Activated T-helper 2 cell treated with anti-CD3 and anti-CD28 coated beads, Interferon-gamma antibody, Interleukin-2, Interleukin-4, amounts not matched to agents 10 μg/mL and 5 μg/mL and 100 μg/mL, durations not matched to agents 14 hours and 24 hours and 36 hours (primary cell): ENCODE measurements at regions of chr3 and their contacts with region 1.

Region 1: DNA sequence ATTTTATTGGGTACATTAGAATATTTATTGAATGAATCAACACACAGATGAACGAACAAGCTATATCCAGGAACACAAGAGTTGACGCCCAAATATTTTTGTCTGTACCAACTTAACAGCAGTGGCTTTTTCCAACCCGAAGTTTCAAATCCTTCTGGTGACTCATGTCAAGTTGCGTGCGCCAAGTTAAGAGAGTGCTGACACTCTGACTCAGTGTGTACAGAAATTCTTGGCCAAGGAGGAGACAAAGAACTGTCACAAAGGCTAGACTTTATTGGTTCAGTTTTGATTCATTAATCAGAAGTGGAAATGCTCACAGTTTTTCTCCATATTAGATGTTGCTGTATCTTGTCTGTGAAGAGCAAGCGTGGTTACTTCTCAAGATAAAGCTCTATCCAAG is 59.6 kb upstream of the TSC22D2 start:
- DNase-seq: no peak
- H3K4me3 Mint-ChIP-seq: no peak overlapping the region
- H3K27ac Mint-ChIP-seq: no peak overlapping the region
- H3K4me1 Mint-ChIP-seq: peaks cover 3% of the 10 kb centered on the region
- H3K27me3 Mint-ChIP-seq: peaks cover 11% of the 10 kb centered on the region

Region 2: DNA sequence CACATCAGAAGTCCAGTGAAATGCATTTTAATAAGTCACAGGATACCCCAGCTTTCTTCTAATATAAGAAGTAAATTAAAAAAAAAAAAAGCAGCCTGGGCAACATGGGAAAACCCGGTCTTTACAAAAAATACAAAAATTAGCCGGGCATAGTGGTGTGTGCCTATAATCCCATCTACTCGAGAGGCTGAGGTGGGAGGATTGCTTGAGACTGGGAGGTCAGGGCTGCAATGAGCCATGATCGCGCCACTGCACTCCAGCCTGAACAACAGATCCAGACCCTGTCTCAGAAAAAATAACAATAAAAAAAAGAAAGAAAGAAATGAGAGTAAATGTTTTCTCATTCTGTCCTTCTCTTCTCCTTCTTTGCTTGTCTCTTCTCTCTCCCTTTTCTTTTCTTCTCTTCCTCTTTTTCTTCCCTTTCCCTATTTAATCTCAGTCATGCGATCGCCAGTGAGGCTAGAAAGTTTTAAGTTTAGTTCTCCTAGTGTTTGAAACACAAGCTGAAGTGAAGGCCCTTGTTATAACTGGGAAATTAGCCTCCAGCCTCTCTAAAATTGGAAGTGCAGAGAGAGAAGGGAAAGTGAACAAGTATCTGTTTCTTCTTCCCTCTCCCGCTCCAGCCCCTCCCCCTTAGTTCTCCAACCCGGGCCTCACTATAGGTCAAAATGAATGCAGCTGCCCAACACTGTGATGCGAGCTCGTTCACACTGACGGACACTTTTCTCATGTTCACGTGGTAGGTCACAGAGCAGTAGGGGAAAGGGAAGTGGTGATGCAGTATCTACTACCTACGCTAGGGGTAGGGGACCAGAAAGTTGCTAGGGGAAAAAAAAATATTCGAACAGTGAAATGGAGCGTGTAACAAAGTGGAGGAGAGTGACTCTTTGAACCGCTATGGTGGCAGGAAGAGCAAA is 36.1 kb after region 1 on chr3:
- intact Hi-C with region 1: loop called (anchors 2 kb)
- DNase-seq: peak; percentile 40
- H3K4me3 Mint-ChIP-seq: peak overlapping the region; percentile 75
- H3K27ac Mint-ChIP-seq: peak overlapping the region; percentile 91
- H3K4me1 Mint-ChIP-seq: peaks cover 32% of the 10 kb centered on the region
- H3K27me3 Mint-ChIP-seq: peaks cover 2% of the 10 kb centered on the region